ENCODE measurements at regions of chr18 and their contacts with region 1.

Region 1: DNA sequence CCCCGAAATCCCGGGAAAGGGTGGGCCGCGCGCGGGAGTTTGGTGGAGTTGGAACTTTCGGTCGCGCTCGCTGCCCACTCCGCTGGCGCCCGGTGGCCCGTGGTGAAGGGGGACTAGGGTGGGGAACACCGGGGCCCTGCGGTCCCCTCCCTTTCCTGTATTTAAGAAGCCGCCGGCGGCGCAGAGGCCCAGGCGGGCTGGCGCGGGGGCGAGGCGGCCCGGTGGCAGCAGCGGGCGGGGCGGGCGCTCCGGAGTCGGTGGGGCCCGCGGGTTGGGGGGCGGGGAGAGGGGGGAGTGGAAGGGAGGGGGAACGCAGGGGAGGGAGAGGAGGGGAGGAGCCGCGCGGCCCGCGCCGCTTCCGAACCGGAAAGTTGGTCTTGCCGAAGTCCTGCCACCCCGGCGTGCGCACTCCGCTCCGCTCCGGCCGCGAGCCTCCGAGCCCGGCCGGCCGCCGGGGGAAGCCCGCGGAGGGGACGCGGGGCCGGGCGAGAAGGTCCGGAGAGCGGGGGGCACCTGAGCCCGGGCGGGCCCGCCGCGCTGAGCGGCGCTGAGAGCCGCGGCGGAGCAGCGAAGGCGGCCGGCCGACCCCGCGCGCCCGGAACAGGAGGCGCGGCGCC is 454 bp upstream of the SALL3 start:
- DNase-seq: no peak
- ATAC-seq: no peak
- H3K4me3 Mint-ChIP-seq: no peak overlapping the region
- H3K27ac Mint-ChIP-seq: no peak overlapping the region
- H3K4me1 Mint-ChIP-seq: peaks cover 17% of the 10 kb centered on the region
- H3K27me3 Mint-ChIP-seq: peaks cover 60% of the 10 kb centered on the region

Region 2: DNA sequence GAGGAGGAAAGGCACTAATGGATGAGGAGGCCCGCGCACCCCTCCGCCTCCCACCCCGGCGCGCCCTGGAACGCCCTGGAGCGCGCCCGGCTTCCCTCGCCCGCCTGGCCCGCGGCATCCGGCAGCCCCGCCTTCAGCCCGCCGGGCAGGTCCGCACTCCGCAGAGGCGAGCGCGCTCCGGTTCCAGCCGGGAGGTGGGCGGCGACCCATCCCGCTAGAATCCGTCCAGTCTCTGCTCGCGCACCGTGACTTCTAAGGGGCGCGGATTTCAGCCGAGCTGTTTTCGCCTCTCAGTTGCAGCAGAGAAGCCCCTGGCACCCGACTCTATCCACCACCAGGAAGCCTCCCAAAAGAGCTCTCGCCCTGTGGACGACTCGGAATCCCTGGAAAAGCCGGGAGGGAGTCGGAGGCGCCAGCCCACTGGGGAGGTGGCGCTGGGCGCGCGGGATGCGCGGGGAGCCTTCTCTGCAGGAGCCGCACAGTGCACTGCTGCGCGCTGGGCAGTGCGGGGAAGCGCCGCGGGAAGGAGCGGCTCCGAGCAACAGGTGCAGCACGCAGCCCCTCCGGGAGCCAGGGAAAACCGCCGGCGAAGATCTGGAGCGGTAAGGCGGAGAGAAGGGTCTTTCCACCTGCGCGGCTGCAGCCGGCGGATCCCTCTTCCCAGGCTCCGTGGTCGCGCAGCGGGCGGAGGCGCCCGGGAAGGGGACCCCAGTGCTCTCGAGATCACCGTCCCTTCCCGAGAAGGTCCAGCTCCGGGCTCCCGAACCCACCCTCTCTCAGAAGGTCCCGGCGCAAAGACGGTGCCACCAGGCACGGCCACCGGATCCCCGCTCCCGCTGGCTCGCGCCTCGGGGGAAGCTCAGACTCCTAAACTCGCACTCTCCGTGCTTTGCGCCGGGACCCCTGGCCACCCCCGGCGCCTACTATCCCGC is 1729.3 kb before region 1 on chr18 and contains the start of gene GALR1:
- CTCF ChIA-PET with region 1: no interaction called
- POLR2A ChIA-PET with region 1: no interaction called
- intact Hi-C with region 1: loop called in 1 of 2 experiments (anchors 5 kb)
- DNase-seq: no peak
- ATAC-seq: peak; percentile 19
- H3K4me3 Mint-ChIP-seq: peak within 1 kb of the TSS; percentile 49
- H3K27ac Mint-ChIP-seq: no peak within 1 kb of the TSS
- H3K4me1 Mint-ChIP-seq: peaks cover 12% of the 10 kb centered on the region
- H3K27me3 Mint-ChIP-seq: peaks cover 59% of the 10 kb centered on the region
- total RNA-seq, gene GALR1: not detected

Region 3: DNA sequence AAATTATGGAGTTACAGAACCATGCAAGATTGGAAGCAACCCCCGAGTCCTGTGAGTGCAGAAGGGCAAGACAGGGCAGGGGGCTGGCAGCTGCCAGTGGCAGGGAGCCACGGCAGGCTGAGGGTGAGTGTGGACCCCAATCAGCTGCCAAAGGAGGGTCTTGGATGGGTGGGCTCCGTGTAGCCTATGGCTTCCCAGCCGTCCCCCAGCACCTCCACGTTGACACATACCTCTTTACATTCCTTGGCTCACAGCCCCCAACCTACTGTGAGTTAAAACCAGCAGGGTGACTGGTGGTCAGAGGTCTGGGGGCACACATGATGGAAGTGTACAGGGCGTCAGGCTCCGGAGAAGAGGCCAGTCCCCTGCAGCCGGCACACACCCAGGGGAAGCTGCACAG is 60.5 kb before region 1 on chr18:
- CTCF ChIA-PET with region 1: no interaction called
- POLR2A ChIA-PET with region 1: no interaction called
- intact Hi-C with region 1: no loop called
- DNase-seq: no peak
- ATAC-seq: no peak
- H3K4me3 Mint-ChIP-seq: no peak overlapping the region
- H3K27ac Mint-ChIP-seq: no peak overlapping the region
- H3K4me1 Mint-ChIP-seq: no peaks in the 10 kb centered on the region
- H3K27me3 Mint-ChIP-seq: peaks cover 8% of the 10 kb centered on the region

Measured in activated CD4-positive, alpha-beta T cell treated with anti-CD3 and anti-CD28 coated beads for 36 hours (primary cell).